ENCODE measurements at regions of chr1 and their contacts with region 1.

Region 1: DNA sequence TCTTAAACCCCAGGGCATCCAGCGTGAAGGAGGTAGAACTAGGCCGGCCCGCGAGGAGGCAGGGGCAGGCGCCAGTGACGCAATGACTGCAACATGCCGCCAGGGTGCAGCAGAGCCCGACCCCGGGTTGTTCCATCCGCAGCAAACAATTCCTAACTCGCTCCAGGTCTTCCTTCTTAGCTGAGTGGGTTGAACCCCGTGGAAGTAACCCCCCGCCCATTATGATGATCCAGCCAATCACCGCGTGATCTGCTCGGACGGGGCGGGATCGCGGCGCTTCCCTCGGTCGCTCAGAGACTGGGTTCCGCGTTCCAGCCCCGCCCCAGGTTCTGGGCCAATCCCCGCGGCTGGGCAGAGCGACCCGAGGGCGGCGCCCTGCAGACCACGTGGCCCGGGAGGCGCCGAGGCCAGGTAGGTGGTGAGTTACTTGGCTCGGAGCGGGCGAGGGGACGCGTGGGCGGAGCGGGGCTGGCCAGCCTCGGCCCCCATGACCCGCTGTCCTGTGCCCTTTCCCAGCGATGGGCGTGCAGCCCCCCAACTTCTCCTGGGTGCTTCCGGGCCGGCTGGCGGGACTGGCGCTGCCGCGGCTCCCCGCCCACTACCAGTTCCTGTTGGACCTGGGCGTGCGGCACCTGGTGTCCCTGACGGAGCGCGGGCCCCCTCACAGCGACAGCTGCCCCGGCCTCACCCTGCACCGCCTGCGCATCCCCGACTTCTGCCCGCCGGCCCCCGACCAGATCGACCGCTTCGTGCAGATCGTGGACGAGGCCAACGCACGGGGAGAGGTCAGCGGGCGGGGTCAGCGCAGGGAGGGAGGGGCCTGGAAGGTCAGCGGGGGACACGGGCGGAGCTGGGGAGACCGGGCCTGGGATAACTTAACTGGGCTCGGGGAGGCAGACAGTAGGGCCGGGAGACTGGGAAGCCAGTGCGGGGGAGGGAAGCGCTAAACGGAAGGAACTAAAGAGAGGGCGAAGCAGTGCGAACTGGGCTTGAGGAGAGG is at the start of gene DUSP23:
- DNase-seq: peak; percentile 91 to 98 (median 96)
- H3K4me3 ChIP-seq: peak within 1 kb of the TSS; percentile 51 to 97 (median 86)
- H3K27ac ChIP-seq: peak within 1 kb of the TSS in 53 of 59 donors; percentile 11 to 87 (median 74)
- H3K27me3 ChIP-seq: no peaks in the 10 kb centered on the region
- CTCF ChIP-seq: peak; percentile 68 to 99 (median 96)
- total RNA-seq, gene DUSP23: 8.3 to 30.2 (median 16.0) TPM

Region 2: GRCh38 chr1:159141584-159142390 is 639.1 kb before region 1 on chr1:
- intact Hi-C with region 1: loop called in 1 of 2 experiments (anchors 10 kb)
- DNase-seq: peak; percentile 55 to 94 (median 86)
- H3K4me3 ChIP-seq: peak overlapping the region; percentile 3 to 69 (median 49)
- H3K27ac ChIP-seq: peak overlapping the region in 47 of 59 donors; percentile 5 to 84 (median 58)
- H3K27me3 ChIP-seq: peaks cover 0 to 17% (median 0%) of the 10 kb centered on the region in 45 donors
- CTCF ChIP-seq: peak in 1 of 56 donors; percentile 16

Region 3: DNA sequence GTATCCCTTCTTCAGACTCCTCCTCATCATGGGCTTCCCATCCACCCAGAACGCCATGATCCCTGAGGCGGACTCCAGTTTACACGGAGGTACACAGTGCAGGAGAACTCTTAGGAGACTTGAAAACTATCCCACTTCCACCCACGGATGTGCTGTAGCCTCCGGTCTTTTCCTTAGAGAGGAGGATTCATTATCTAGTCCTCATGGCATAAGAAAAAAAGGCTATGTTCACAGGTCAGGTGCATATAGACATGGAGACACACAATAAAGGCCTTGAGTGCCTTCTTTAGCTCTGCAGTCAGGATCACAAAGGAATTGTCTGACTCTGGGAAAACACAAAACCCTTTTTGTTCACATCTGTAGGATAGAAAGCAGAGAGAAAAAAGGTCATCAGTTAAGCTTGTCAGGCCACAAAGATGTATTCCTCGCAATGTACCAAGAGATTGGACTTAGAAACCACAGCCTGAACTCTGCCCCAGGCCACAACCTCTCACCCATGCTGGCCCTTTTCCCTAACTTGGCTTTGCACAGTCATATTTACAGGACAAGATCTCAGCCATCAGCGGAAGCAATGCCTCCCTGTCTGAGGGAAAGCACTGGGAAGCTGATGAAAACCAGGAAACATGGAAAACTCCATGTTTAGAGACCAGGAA is 75.5 kb before region 1 on chr1:
- intact Hi-C with region 1: loop called in 1 of 2 experiments (anchors 10 kb)
- DNase-seq: no peak
- H3K4me3 ChIP-seq: no peak overlapping the region
- H3K27ac ChIP-seq: peak overlapping the region in 47 of 59 donors; percentile 5 to 84 (median 58)
- H3K27me3 ChIP-seq: no peaks in the 10 kb centered on the region
- CTCF ChIP-seq: no peak

Region 4: DNA sequence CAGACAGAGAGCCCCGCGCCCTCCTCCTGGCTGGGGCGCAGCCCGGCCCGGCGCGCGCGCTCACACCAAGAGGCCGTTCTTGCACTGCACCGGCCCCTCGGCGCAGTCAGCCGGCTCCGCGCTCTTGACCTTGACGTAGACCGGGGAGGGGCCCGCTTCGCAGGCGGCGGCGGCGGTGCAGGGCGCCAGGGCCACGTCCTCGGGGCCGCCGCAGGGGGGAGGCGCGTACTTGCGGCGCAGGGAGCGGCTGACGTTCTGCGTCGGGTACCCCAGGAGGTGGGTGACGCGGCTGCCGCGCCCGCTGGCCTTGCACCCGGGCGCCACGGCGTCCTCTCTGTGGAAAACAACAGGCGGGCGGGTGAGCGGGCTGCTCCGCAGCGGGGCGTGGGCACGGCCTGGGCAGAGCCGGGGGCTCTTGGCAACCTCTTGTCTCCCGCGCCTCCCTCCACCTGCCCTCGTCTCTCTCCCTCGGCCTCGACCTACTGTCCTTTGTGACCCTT is 73.9 kb after region 1 on chr1:
- intact Hi-C with region 1: loop called (anchors 2 kb)
- DNase-seq: peak; percentile 62 to 89 (median 76)
- H3K4me3 ChIP-seq: peak overlapping the region; percentile 37 to 96 (median 81)
- H3K27ac ChIP-seq: peak overlapping the region; percentile 60 to 96 (median 91)
- H3K27me3 ChIP-seq: no peaks in the 10 kb centered on the region
- CTCF ChIP-seq: peak in 26 of 56 donors; percentile 11 to 46 (median 26)

Region 5: GRCh38 chr1:160398823-160399222 is 617.9 kb after region 1 on chr1:
- intact Hi-C with region 1: no loop called
- DNase-seq: no peak
- H3K4me3 ChIP-seq: no peak overlapping the region
- H3K27ac ChIP-seq: no peak overlapping the region
- H3K27me3 ChIP-seq: peaks cover 0 to 12% (median 0%) of the 10 kb centered on the region in 45 donors
- CTCF ChIP-seq: no peak